Thyroid gland (tissue), 4 donors: ENCODE measurements at regions of chr19 and their contacts with region 1.

Region 1: DNA sequence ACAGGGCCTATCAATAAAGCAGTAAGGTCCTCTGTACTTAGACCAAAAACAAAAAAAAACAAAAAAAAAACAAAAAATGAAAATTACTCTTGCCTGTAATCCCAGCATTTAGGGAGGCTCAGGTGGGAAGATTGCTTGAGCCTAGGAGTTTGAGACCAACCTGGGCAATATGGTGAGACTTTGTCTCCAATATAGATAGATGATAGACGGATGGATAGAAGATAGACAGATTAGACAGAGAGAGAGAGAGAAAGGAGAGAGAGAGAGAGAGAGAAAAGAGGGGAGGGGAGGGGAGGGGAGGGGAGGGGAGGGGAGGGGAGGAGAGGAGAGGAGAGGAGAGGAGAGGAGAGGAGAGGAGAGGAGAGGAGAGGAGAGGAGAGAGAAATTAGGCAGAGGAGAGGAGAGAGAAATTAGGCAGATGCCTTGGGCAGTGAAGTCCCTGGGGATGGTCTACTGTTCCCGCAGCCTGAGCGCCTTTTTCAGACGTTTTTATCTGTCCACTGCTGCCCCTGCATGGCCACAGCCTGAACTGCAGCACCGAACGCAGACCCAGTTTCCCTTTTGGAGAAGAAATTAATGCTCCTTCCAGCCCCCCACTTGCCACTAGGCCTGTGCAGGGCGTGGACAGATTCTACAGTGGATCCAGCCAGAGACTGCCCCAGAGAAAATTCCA is 9.8 kb upstream of the ZNF627 start:
- DNase-seq: peak; percentile 66 to 75
- H3K4me3 ChIP-seq: no peak overlapping the region
- H3K27ac ChIP-seq: no peak overlapping the region
- H3K4me1 ChIP-seq: no peaks in the 10 kb centered on the region
- H3K27me3 ChIP-seq: no peaks in the 10 kb centered on the region
- CTCF ChIP-seq: peak; percentile 78 to 92 (median 82)
- POLR2A ChIP-seq: no peak

Region 2: GRCh38 chr19:11346092-11346940 is 241.1 kb before region 1 on chr19 and contains the starts of genes CCDC159 and TMEM205:
- intact Hi-C with region 1: no loop called
- DNase-seq: peak; percentile 99
- H3K4me3 ChIP-seq: peak within 1 kb of the TSS; percentile 32 to 52 (median 37)
- H3K27ac ChIP-seq: peak within 1 kb of the TSS; percentile 73 to 90 (median 87)
- H3K4me1 ChIP-seq: peaks cover 17 to 28% of the 10 kb centered on the region in 2 donors
- H3K27me3 ChIP-seq: no peaks in the 10 kb centered on the region
- CTCF ChIP-seq: no peak
- POLR2A ChIP-seq: peak; percentile 27 to 74
- total RNA-seq, gene CCDC159: 27.0 to 36.9 (median 34.5) TPM
- total RNA-seq, gene TMEM205: 266 to 1,029 (median 650) TPM

Region 3: GRCh38 chr19:11496391-11497163 is 90.9 kb before region 1 on chr19:
- intact Hi-C with region 1: loop called (anchors 10 kb)
- DNase-seq: peak; percentile 45 to 49
- H3K4me3 ChIP-seq: no peak overlapping the region
- H3K27ac ChIP-seq: no peak overlapping the region
- H3K4me1 ChIP-seq: no peaks in the 10 kb centered on the region
- H3K27me3 ChIP-seq: no peaks in the 10 kb centered on the region
- CTCF ChIP-seq: peak in 3 of 6 experiments; percentile 27 to 52 (median 30)
- POLR2A ChIP-seq: no peak

Region 4: GRCh38 chr19:11693495-11694173 is 106.2 kb after region 1 on chr19:
- intact Hi-C with region 1: no loop called
- DNase-seq: peak in 1 of 2 donors; percentile 5
- H3K4me3 ChIP-seq: no peak overlapping the region
- H3K27ac ChIP-seq: no peak overlapping the region
- H3K4me1 ChIP-seq: peaks cover 3 to 9% of the 10 kb centered on the region in 2 donors
- H3K27me3 ChIP-seq: no peaks in the 10 kb centered on the region
- CTCF ChIP-seq: no peak
- POLR2A ChIP-seq: no peak